ENCODE measurements at regions of chrX and their contacts with region 1.

Region 1: GRCh38 chrX:107776649-107777535 is 641 bp upstream of the NCBP2L start:
- DNase-seq: peak; percentile 65
- H3K27ac ChIP-seq: peak overlapping the region; percentile 95
- CTCF ChIP-seq: peak; percentile 57

Region 2: GRCh38 chrX:107646735-107647134 is 130.2 kb before region 1 on chrX:
- CTCF ChIA-PET with region 1: no interaction called
- POLR2A ChIA-PET with region 1: no interaction called
- DNase-seq: no peak
- H3K27ac ChIP-seq: no peak overlapping the region
- CTCF ChIP-seq: no peak

Region 3: GRCh38 chrX:107659768-107660167 is 117.1 kb before region 1 on chrX:
- CTCF ChIA-PET with region 1: interaction called, 12 read pairs
- POLR2A ChIA-PET with region 1: no interaction called
- DNase-seq: peak; percentile 3
- H3K27ac ChIP-seq: peak overlapping the region; percentile 62
- CTCF ChIP-seq: peak; percentile 65

Region 4: GRCh38 chrX:107672955-107673378 is 103.9 kb before region 1 on chrX:
- CTCF ChIA-PET with region 1: interaction called, 12 read pairs
- POLR2A ChIA-PET with region 1: interaction called, 4 read pairs
- DNase-seq: peak; percentile 47
- H3K27ac ChIP-seq: peak overlapping the region; percentile 99
- CTCF ChIP-seq: peak; percentile 73